ENCODE measurements at regions of chr17 and their contacts with region 1.

Region 1: DNA sequence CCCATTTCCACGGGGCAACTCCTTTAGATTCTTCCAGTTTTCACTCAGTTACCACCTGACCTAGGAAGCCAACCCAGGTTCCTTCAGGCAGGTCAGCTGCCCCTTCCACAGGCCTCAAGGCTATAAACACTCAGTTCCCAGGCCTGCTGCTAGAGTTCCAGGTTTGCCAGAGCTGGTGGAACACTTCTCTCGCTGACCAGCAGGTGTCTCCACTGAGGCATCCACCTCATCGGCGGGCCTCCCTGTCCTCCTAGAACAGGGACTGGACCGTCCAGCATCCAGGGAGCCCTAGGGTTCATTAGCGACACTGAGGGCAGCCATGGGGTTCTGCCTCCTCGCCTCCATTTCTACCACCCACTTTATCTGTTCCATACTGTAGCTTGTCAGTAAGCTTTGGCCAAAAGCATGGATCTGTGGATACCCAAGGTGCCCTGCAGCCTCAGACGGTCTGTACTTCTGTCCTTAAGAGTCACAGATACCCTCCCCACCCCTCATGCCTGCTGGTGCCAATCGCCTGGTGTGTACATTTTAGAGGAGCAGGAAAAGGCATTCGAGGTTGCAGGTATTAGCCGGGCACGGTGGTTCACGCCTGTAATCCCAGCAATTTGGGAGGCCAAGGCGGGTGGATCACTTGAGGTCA is 29.0 kb downstream of the PIMREG start:
- DNase-seq: peak; percentile 85 to 95 (median 90)
- H3K4me3 ChIP-seq: no peak overlapping the region
- H3K27ac ChIP-seq: no peak overlapping the region
- H3K4me1 ChIP-seq: peaks cover 0 to 23% of the 10 kb centered on the region in 2 donors
- H3K27me3 ChIP-seq: no peaks in the 10 kb centered on the region
- CTCF ChIP-seq: peak; percentile 91 to 98 (median 95)
- POLR2A ChIP-seq: peak in 1 of 2 donors; percentile 26

Region 2: DNA sequence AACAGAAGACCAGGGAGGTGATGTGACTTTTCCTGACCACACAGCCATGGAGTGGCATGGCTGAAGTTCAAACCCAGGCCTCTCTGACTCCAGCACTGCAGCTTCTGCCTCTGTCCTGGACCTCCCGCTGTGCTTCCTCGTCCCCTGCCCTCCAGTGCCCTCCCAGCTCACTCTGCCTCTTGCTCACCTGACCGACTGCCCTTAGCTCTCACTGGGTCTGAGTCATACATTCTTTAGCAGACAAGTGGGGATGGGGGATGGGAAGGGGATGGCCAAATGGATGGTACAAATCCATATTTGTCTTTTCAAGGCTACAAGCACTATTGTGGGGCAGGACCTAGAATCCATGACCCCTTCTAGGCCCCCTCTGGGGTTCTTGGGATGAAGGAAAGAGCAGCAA is 50.1 kb after region 1 on chr17:
- intact Hi-C with region 1: no loop called
- DNase-seq: peak in 5 of 7 donors; percentile 30 to 60 (median 55)
- H3K4me3 ChIP-seq: no peak overlapping the region
- H3K27ac ChIP-seq: no peak overlapping the region
- H3K4me1 ChIP-seq: no peaks in the 10 kb centered on the region
- H3K27me3 ChIP-seq: no peaks in the 10 kb centered on the region
- CTCF ChIP-seq: no peak
- POLR2A ChIP-seq: no peak

Region 3: DNA sequence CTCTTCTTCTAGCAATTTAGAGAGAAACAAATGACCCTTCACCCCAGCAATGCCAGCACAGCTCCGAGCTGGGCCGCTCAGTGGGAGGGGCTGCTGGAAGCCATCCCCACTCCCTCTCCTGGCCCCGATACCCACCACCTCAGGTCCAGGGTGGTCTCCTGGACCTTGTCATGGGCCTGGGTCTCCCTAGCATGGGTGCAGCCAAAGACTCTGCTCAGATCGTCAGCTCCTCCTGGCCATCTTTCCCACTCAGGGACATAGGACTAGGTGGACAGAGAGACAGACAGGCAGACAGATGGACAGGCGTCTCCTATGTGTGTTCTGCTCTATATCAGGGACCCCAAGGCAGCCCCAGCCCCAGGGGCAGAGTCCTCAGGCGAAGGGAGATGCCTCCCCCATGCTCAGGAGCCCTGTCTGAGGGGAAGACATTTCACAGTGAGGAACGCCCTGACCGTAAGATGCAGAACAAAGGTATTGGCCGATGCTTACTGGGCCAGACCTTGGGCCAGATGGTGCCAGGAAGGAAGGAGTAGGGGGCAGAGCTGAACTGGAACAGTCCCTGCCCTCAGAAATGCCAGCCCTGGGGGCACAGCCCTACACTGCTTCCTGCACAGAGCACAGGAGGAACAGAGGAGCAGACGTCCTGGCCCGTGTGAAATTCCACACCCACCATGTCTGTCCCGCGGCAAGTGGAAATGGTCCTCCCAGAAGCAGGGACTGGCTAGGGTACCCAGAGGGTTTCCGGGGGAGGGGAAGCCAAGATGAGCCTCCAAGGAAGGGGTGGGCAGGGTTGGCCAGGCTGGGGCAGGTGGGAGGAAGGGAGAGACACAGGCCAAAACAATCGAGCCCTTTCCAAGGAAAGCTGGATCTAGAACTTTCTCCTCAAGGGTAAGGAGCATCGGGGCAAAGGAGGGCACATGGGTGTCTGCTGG is 70.1 kb after region 1 on chr17:
- intact Hi-C with region 1: no loop called
- DNase-seq: no peak
- H3K4me3 ChIP-seq: no peak overlapping the region
- H3K27ac ChIP-seq: no peak overlapping the region
- H3K4me1 ChIP-seq: no peaks in the 10 kb centered on the region
- H3K27me3 ChIP-seq: no peaks in the 10 kb centered on the region
- CTCF ChIP-seq: no peak
- POLR2A ChIP-seq: no peak

Region 4: GRCh38 chr17:6555331-6556120 is 82.3 kb after region 1 on chr17:
- intact Hi-C with region 1: loop called in 1 of 2 experiments (anchors 10 kb)
- DNase-seq: peak in 6 of 7 donors; percentile 39 to 61 (median 41)
- H3K4me3 ChIP-seq: peak overlapping the region in 3 of 4 donors; percentile 16 to 53 (median 32)
- H3K27ac ChIP-seq: no peak overlapping the region
- H3K4me1 ChIP-seq: peaks cover 11 to 25% of the 10 kb centered on the region in 2 donors
- H3K27me3 ChIP-seq: no peaks in the 10 kb centered on the region
- CTCF ChIP-seq: no peak
- POLR2A ChIP-seq: no peak

Region 5: DNA sequence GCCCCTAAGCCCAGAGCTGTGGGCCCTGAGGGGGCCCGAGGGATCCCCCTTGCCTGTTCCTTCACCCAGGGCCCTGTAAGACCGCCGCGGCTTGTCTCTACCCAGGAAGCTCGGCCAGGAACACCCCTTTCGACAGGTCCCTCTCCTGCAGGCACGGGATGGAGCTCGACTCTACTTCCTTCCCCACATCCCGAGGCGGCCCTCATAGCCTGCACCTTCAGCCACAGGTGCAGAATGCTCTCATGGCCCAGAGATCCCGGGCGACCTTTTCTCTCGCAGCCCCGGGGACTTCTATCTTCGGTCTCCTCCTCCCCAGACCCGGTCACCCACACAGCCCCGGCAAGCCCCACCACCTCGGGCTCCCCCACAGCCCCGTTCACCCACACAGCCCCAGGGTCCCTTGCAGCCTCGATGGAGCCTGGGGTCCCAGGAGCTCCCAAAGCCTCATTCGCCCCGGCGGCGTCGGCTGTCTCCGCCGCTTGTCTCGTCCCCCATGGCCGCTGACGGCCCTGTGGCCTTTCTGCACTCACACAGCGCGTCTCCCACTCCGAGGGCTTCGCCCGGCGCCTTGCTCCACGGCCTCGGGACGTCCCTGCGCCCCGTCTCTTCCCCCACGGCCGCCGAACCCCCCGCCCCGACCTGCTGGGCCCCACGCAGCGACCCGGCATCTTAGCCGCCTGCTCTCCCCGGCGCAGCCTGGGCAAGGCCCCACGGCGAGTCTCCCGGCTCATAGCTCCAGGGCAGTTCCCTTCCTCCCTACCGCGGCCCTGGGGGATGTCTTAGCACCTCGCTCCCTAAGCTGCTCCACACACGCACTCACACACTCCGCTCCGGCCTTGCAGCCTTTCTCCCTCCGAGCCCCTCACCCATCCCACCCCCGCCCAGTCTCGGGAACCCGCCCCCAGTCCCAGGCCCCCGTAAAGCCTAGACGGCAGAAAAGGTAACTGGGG is 166.6 kb after region 1 on chr17:
- intact Hi-C with region 1: loop called (anchors 5 to 10 kb)
- DNase-seq: peak in 6 of 7 donors; percentile 35 to 56 (median 48)
- H3K4me3 ChIP-seq: peak overlapping the region; percentile 60 to 91 (median 86)
- H3K27ac ChIP-seq: peak overlapping the region; percentile 71 to 95 (median 78)
- H3K4me1 ChIP-seq: peaks cover 13 to 23% of the 10 kb centered on the region in 2 donors
- H3K27me3 ChIP-seq: no peaks in the 10 kb centered on the region
- CTCF ChIP-seq: no peak
- POLR2A ChIP-seq: no peak

Measured in adrenal gland (tissue), 19 donors.